GM12878 (cell line): ENCODE measurements at regions of chr6 and their contacts with region 1.

Region 1: DNA sequence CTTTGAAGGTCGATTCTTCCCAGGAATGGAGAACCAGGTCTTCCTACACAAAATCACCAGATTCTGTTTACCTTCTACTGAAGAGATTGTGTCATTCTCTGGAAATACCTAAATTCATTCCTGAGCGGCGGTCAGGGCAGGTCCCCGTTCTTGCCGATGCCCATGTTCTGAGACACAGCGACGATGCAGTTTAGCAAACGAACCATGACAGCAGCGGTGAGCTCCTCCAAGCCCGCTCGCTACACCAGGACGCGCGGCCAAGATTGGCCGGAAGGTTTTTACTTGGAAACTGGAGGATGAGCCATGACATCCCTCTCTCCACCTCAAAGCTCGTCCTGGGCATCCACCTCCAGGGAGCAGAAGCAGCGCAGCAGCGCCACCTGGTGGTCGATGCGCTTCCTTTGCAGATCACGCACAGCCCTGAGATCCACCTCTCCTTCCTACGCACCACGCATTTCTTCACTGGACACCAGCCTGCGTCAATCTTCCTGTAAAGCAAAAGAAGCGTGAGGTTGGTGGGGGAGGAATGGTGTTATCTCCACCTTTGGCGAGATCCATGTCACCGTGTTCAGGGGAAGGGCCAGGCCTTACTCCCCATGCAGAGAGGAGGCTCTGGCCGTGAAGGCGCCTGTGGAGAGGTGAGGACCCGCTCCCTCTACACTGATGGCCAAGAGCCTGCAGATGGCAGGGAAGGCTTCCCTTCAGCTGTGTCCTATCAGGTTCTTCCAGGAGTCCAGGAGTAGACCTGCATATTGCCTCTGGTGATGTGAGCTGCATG is 9.9 kb upstream of the HLA-B start:
- DNase-seq: peak; percentile 58
- ATAC-seq: peak; percentile 100
- H3K4me3 ChIP-seq: peak overlapping the region; percentile 73
- H3K27ac ChIP-seq: no peak overlapping the region
- H3K4me1 ChIP-seq: peaks cover 6% of the 10 kb centered on the region
- H3K27me3 ChIP-seq: no peaks in the 10 kb centered on the region; a peak in 1 of 4 replicates
- CTCF ChIP-seq: peak; percentile 90 to 95 (median 94)
- EP300 ChIP-seq: no peak
- POLR2A ChIP-seq: no peak
- RAD21 ChIP-seq: peak; percentile 92

Region 2: DNA sequence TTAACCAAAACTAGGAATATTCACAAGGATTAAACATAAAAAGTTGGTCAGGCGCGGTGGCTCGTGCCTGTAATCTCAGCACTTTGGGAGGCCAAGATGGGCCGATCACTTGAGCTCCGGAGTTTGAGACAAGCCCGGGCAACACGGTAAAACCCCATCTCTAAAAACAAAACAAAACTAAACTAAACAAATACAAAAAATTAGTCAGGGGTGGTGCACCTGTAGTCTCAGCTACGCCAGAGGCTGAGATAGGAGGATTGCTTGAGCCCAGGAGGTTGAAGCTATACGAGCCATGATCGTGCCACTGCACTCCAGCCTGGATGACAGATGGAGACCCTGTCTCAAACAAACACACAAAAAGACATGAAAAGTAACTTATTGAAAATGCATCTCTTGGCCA is 231.2 kb before region 1 on chr6:
- CTCF ChIA-PET with region 1: interaction called, 29 read pairs
- POLR2A ChIA-PET with region 1: no interaction called
- RAD21 ChIA-PET with region 1: interaction called, 5 read pairs
- SMC1A ChIA-PET with region 1: interaction called, 22 read pairs
- in situ Hi-C with region 1: loop called (anchors 5 kb)
- intact Hi-C with region 1: loop called (anchors 2 kb)
- DNase-seq: no peak
- ATAC-seq: peak; percentile 62
- H3K4me3 ChIP-seq: no peak overlapping the region
- H3K27ac ChIP-seq: no peak overlapping the region
- H3K4me1 ChIP-seq: peaks cover 3% of the 10 kb centered on the region
- H3K27me3 ChIP-seq: no peaks in the 10 kb centered on the region
- CTCF ChIP-seq: no peak
- EP300 ChIP-seq: no peak
- POLR2A ChIP-seq: no peak
- RAD21 ChIP-seq: no peak

Region 3: DNA sequence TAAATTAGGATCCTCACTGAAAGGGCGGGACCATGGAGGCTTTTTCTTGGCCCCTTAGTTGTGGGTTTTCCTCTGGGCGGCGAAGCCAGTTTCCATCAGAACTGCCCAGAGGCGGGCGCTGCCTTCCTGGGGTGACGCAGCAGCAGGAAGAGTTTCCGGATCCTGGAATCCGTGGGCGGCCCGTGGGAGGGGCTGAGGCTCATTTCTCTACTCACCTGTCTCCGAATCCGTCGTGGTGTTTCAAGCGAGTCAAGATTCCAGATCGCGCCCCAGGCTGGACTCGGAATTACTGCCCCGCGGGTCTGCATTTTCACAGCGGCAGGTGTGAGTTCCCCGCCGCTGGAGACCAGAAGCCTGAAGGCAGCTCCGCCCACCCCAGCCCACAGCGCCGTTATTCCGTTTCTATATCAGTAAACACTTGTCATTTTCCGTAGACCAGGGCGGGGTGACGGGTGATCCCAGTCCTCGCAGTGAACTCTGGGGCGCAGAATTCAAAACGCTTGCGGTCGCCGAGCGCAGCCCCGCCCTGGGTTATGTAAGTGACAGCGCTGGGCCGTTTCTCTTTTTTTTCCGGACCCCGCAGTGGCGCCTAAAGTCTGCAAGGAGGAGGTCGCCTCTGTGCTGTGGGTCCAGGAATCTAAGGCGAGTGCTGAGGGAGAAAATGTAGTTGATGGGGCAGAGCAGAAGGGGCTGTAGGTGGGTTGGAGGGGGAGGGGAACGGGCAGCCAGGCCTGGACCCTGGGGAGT is 169.2 kb before region 1 on chr6:
- CTCF ChIA-PET with region 1: interaction called, 69 read pairs
- POLR2A ChIA-PET with region 1: interaction called, 6 read pairs
- RAD21 ChIA-PET with region 1: interaction called, 84 read pairs
- SMC1A ChIA-PET with region 1: interaction called, 35 read pairs
- in situ Hi-C with region 1: loop called (anchors 5 kb)
- intact Hi-C with region 1: loop called (anchors 1 kb)
- DNase-seq: peak; percentile 69
- ATAC-seq: peak; percentile 84
- H3K4me3 ChIP-seq: peak overlapping the region; percentile 87
- H3K27ac ChIP-seq: peak overlapping the region; percentile 97
- H3K4me1 ChIP-seq: peaks cover 15% of the 10 kb centered on the region
- H3K27me3 ChIP-seq: no peaks in the 10 kb centered on the region
- CTCF ChIP-seq: no peak
- EP300 ChIP-seq: peak; percentile 31 to 54; a peak in 2 of 4 replicates
- POLR2A ChIP-seq: peak; percentile 87
- RAD21 ChIP-seq: 0 out of 2 replicates have a peak, but pooled peaks have one; percentile 12

Region 4: DNA sequence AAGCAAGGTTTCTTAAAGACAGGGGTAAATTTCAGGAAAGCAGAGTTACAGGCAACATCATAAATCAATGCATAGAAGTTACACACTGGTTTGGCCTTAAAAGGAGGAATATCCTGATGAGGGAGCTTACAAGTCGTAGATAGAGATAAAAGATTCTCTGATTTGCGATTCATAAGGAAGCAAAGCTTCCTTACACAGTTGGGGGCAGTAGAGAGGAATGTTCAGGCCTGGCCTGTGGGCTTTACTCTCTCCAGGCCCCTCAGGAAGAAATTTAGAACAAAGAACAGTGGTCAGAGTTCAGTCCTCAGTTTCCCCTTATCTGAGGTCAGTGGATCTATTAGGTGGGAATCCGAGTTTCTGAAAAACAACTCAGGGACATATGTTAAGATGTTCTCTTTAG is 114.3 kb before region 1 on chr6:
- CTCF ChIA-PET with region 1: interaction called, 11 read pairs
- POLR2A ChIA-PET with region 1: no interaction called
- RAD21 ChIA-PET with region 1: interaction called, 5 read pairs
- SMC1A ChIA-PET with region 1: interaction called, 5 read pairs
- in situ Hi-C with region 1: no loop called
- intact Hi-C with region 1: no loop called
- DNase-seq: no peak
- ATAC-seq: no peak
- H3K4me3 ChIP-seq: no peak overlapping the region
- H3K27ac ChIP-seq: no peak overlapping the region
- H3K4me1 ChIP-seq: no peaks in the 10 kb centered on the region
- H3K27me3 ChIP-seq: no peaks in the 10 kb centered on the region; a peak in 1 of 4 replicates
- CTCF ChIP-seq: no peak
- EP300 ChIP-seq: no peak
- POLR2A ChIP-seq: no peak
- RAD21 ChIP-seq: no peak

Region 5: GRCh38 chr6:31377029-31377428 is 10.1 kb after region 1 on chr6:
- CTCF ChIA-PET with region 1: interaction called, 10 read pairs
- POLR2A ChIA-PET with region 1: interaction called, 3 read pairs
- RAD21 ChIA-PET with region 1: interaction called, 10 read pairs
- SMC1A ChIA-PET with region 1: interaction called, 4 read pairs
- in situ Hi-C with region 1: no loop called
- intact Hi-C with region 1: no loop called
- DNase-seq: no peak
- ATAC-seq: no peak
- H3K4me3 ChIP-seq: no peak overlapping the region
- H3K27ac ChIP-seq: no peak overlapping the region
- H3K4me1 ChIP-seq: no peaks in the 10 kb centered on the region
- H3K27me3 ChIP-seq: peaks cover 3% of the 10 kb centered on the region in 2 experiments; a peak in 2 of 4 replicates
- CTCF ChIP-seq: no peak
- EP300 ChIP-seq: no peak
- POLR2A ChIP-seq: no peak
- RAD21 ChIP-seq: no peak

Region 6: DNA sequence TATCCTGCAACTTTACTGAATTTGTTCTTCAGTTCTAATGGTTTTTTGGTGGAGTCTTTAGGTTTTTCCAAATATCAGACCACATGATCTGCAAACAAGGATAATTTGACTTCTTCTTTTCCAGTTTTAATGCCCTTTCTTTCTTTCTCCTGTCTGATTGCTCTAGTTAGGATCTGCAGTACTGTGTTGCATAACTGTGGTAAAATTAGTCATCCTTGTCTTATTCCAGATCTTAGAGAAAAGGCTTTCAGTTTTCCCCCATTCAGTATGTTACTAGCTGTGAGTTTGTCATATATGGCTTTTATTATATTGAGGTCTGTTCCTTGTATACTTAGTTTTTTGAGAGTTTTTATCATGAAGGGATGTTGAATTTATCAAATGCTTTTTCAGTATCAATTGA is 40.8 kb after region 1 on chr6:
- CTCF ChIA-PET with region 1: no interaction called
- POLR2A ChIA-PET with region 1: no interaction called
- RAD21 ChIA-PET with region 1: no interaction called
- SMC1A ChIA-PET with region 1: no interaction called
- in situ Hi-C with region 1: no loop called
- intact Hi-C with region 1: no loop called
- DNase-seq: no peak
- ATAC-seq: no peak
- H3K4me3 ChIP-seq: no peak overlapping the region
- H3K27ac ChIP-seq: no peak overlapping the region
- H3K4me1 ChIP-seq: peaks cover 5% of the 10 kb centered on the region; the same call in 1 of the 2 replicates
- H3K27me3 ChIP-seq: no peaks in the 10 kb centered on the region
- CTCF ChIP-seq: no peak
- EP300 ChIP-seq: no peak
- POLR2A ChIP-seq: no peak
- RAD21 ChIP-seq: no peak